Common myeloid progenitor, CD34-positive (primary cell): ENCODE measurements at regions of chr21 and their contacts with region 1.

Region 1: DNA sequence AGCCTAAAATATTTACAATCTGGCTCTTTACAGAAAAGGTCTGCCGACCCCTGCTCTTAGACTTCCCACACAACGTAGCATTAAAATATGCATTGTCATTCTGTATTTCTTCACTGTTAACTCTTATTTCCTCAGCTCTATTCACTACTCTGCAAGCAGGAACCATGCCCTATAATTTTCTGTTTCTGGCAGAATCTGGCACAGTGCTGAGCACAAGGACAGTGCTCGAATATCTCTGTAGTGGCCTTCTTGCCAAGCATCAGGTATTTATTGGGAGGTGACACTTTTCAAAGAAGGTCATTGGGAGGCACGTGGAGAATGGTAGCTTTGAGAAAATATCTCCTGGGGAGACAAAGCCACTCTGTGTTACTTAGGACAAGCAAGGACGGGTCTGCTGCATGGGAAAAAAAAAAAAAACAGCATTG is 77.9 kb downstream of the PSMG1 start:
- DNase-seq: peak; percentile 42 to 86 (median 79)
- H3K4me3 ChIP-seq: peak overlapping the region in 3 of 7 experiments; percentile 0 to 30 (median 7)
- H3K27ac ChIP-seq: peak overlapping the region; percentile 16 to 65
- H3K4me1 ChIP-seq: peaks cover 4 to 29% (median 26%) of the 10 kb centered on the region in 4 experiments
- H3K27me3 ChIP-seq: no peaks in the 10 kb centered on the region

Region 2: GRCh38 chr21:39094847-39095579 is 10.3 kb before region 1 on chr21:
- CTCF ChIA-PET with region 1: interaction called, 17 read pairs
- POLR2A ChIA-PET with region 1: no interaction called
- DNase-seq: peak; percentile 52 to 74 (median 70)
- H3K4me3 ChIP-seq: no peak overlapping the region
- H3K27ac ChIP-seq: no peak overlapping the region
- H3K4me1 ChIP-seq: peaks cover 3 to 49% (median 34%) of the 10 kb centered on the region in 4 experiments
- H3K27me3 ChIP-seq: no peaks in the 10 kb centered on the region